Esophagus squamous epithelium (tissue), 5 donors: ENCODE measurements at regions of chr20 and their contacts with region 1.

Region 1: GRCh38 chr20:38165089-38165989 is at the start of gene TGM2:
- DNase-seq: peak; percentile 14
- H3K4me3 ChIP-seq: peak within 1 kb of the TSS; percentile 25 to 69 (median 46)
- H3K27ac ChIP-seq: peak within 1 kb of the TSS; percentile 13 to 87 (median 75)
- H3K4me1 ChIP-seq: peaks cover 21 to 75% (median 35%) of the 10 kb centered on the region in 3 donors
- H3K27me3 ChIP-seq: no peaks in the 10 kb centered on the region
- CTCF ChIP-seq: peak; percentile 48 to 87 (median 80)
- POLR2A ChIP-seq: peak in 1 of 4 donors; percentile 30
- total RNA-seq, gene TGM2: 2.8 to 33.2 (median 11.5) TPM

Region 2: GRCh38 chr20:37406010-37406998 is 759.0 kb before region 1 on chr20:
- intact Hi-C with region 1: no loop called
- DNase-seq: no peak
- H3K4me3 ChIP-seq: peak overlapping the region; percentile 8 to 58 (median 28)
- H3K27ac ChIP-seq: no peak overlapping the region
- H3K4me1 ChIP-seq: peaks cover 11 to 33% (median 18%) of the 10 kb centered on the region in 3 donors
- H3K27me3 ChIP-seq: peaks cover 0 to 30% (median 0%) of the 10 kb centered on the region in 4 donors
- CTCF ChIP-seq: peak in 1 of 6 experiments; percentile 8
- POLR2A ChIP-seq: no peak

Region 3: GRCh38 chr20:38073307-38074071 is 91.8 kb before region 1 on chr20:
- intact Hi-C with region 1: loop called (anchors 10 kb)
- DNase-seq: no peak
- H3K4me3 ChIP-seq: no peak overlapping the region
- H3K27ac ChIP-seq: peak overlapping the region; percentile 25 to 88 (median 75)
- H3K4me1 ChIP-seq: peaks cover 0 to 39% (median 4%) of the 10 kb centered on the region in 3 donors
- H3K27me3 ChIP-seq: no peaks in the 10 kb centered on the region
- CTCF ChIP-seq: peak; percentile 47 to 74 (median 70)
- POLR2A ChIP-seq: no peak